ENCODE measurements at regions of chr2 and their contacts with region 1.

Region 1: DNA sequence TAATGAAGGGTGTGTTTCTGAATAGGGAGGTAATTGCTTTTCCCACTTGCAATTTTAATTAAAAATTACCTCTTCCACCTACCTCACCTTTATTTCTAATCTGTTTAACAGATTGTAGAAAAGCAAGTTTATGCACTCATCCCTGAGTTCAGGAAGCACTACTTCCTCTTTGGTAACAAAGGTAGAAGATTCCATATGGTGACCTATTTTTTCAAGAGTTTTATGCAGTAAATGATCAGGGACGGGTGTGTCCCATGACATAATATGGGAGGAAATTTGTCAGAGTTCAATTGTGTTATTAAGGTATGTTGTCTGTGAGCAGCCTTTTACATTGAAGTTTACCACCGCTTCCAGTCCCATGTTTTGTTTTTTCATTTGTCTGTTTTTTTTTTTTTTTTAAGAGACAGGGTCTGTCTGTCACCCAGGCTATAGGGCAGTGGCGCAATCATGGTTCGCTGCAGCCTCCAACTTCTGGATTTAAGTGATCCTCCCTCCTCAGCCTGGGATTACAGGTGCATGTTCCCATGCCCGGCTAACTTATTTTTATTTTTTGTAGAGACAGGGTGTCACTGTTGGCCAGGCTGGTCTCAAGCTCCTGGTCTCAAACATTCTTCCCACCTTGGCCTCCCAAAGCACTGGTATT is 68.2 kb downstream of the ASAP2 start:
- DNase-seq: no peak
- H3K4me3 ChIP-seq: no peak overlapping the region
- H3K27ac ChIP-seq: no peak overlapping the region
- H3K4me1 ChIP-seq: peaks cover 22% of the 10 kb centered on the region
- H3K27me3 ChIP-seq: no peaks in the 10 kb centered on the region
- CTCF ChIP-seq: no peak

Region 2: GRCh38 chr2:9222239-9222892 is 52.5 kb before region 1 on chr2:
- CTCF ChIA-PET with region 1: no interaction called
- dilution Hi-C with region 1: loop called (anchors 5 kb)
- in situ Hi-C with region 1: no loop called
- intact Hi-C with region 1: no loop called
- DNase-seq: peak; percentile 44
- H3K4me3 ChIP-seq: peak overlapping the region in 1 of 3 experiments; percentile 6
- H3K27ac ChIP-seq: peak overlapping the region; percentile 28
- H3K4me1 ChIP-seq: peaks cover 31% of the 10 kb centered on the region
- H3K27me3 ChIP-seq: no peaks in the 10 kb centered on the region
- CTCF ChIP-seq: no peak

Region 3: GRCh38 chr2:9326975-9327374 is 52.2 kb after region 1 on chr2:
- CTCF ChIA-PET with region 1: no interaction called
- dilution Hi-C with region 1: loop called (anchors 5 kb)
- in situ Hi-C with region 1: no loop called
- intact Hi-C with region 1: no loop called
- DNase-seq: no peak
- H3K4me3 ChIP-seq: no peak overlapping the region
- H3K27ac ChIP-seq: no peak overlapping the region
- H3K4me1 ChIP-seq: no peaks in the 10 kb centered on the region
- H3K27me3 ChIP-seq: no peaks in the 10 kb centered on the region
- CTCF ChIP-seq: no peak

Region 4: DNA sequence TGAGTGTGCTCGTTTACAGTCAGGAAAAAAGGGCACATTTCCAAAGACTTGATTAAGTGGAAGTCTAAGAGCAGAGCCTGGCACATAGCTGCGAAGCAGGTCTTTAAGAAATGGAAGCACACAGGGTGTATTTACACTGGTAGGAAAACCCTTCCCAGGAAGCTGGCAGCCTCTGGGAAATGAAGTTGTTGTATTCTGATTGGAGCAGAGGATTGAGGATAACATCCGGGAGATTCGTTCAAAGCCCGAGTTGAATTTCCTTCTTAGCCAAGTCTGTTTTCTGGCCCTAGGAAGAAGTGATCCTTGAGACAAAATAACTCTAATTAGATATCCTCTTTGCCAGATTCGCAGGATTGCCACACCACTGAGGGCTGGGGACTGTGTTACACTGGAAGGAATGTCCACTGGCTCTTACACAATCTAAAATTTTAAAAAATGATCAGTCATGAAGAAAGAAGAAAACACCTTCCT is 72.6 kb after region 1 on chr2:
- CTCF ChIA-PET with region 1: no interaction called
- dilution Hi-C with region 1: no loop called
- in situ Hi-C with region 1: no loop called
- intact Hi-C with region 1: no loop called
- DNase-seq: no peak
- H3K4me3 ChIP-seq: no peak overlapping the region
- H3K27ac ChIP-seq: no peak overlapping the region
- H3K4me1 ChIP-seq: no peaks in the 10 kb centered on the region
- H3K27me3 ChIP-seq: no peaks in the 10 kb centered on the region
- CTCF ChIP-seq: no peak

Measured in mammary epithelial cell (primary cell).